ENCODE measurements at regions of chr9 and their contacts with region 1.

Region 1: GRCh38 chr9:113401027-113401792 is at the start of gene ALAD:
- DNase-seq: peak; percentile 99 to 100 (median 100)
- ATAC-seq: peak; percentile 99
- H3K4me3 ChIP-seq: peak within 1 kb of the TSS; percentile 44
- H3K4me1 ChIP-seq: peaks cover 28% of the 10 kb centered on the region
- CTCF ChIP-seq: peak; percentile 98
- total RNA-seq, gene ALAD: 51.2 to 82.4 (median 56.3) TPM

Region 2: GRCh38 chr9:113309204-113309813 is 91.9 kb before region 1 on chr9:
- intact Hi-C with region 1: loop called in 1 of 2 experiments (anchors 10 kb)
- DNase-seq: peak in 1 of 3 donors; percentile 61
- ATAC-seq: peak; percentile 67
- H3K4me3 ChIP-seq: no peak overlapping the region
- H3K4me1 ChIP-seq: no peaks in the 10 kb centered on the region
- CTCF ChIP-seq: peak; percentile 29

Region 3: DNA sequence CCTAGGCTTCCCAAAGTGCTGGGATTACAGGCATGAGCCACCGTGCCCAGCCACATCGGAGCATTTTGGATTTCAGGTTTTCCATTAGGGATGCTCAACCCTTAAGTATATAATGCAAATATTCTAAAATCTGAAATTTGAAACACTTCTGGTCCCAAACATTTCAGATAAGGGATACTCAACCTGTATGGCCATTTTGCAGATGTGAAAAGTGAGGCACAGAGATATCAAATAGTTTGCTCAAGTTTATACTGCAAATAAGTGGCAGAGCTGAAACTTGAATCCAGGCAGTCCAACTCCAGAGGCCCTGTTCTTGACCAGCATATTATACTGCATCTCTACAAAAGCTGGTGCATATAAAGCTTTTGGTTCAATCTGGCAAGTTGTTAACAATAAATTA is 63.5 kb before region 1 on chr9:
- intact Hi-C with region 1: loop called in 1 of 2 experiments (anchors 2 kb)
- DNase-seq: no peak
- ATAC-seq: no peak
- H3K4me3 ChIP-seq: no peak overlapping the region
- H3K4me1 ChIP-seq: peaks cover 6% of the 10 kb centered on the region
- CTCF ChIP-seq: no peak

Region 4: GRCh38 chr9:113454914-113455761 is 53.9 kb after region 1 on chr9:
- intact Hi-C with region 1: no loop called
- DNase-seq: peak in 1 of 3 donors; percentile 32
- ATAC-seq: peak; percentile 56
- H3K4me3 ChIP-seq: no peak overlapping the region
- H3K4me1 ChIP-seq: no peaks in the 10 kb centered on the region
- CTCF ChIP-seq: no peak

Region 5: GRCh38 chr9:113511856-113512761 is 110.9 kb after region 1 on chr9:
- intact Hi-C with region 1: no loop called
- DNase-seq: peak in 2 of 3 donors; percentile 49 to 62
- ATAC-seq: no peak
- H3K4me3 ChIP-seq: no peak overlapping the region
- H3K4me1 ChIP-seq: peaks cover 59% of the 10 kb centered on the region
- CTCF ChIP-seq: no peak

Measured in mucosa of descending colon (tissue), 3 donors.